ENCODE measurements at regions of chr7 and their contacts with region 1.

Region 1: DNA sequence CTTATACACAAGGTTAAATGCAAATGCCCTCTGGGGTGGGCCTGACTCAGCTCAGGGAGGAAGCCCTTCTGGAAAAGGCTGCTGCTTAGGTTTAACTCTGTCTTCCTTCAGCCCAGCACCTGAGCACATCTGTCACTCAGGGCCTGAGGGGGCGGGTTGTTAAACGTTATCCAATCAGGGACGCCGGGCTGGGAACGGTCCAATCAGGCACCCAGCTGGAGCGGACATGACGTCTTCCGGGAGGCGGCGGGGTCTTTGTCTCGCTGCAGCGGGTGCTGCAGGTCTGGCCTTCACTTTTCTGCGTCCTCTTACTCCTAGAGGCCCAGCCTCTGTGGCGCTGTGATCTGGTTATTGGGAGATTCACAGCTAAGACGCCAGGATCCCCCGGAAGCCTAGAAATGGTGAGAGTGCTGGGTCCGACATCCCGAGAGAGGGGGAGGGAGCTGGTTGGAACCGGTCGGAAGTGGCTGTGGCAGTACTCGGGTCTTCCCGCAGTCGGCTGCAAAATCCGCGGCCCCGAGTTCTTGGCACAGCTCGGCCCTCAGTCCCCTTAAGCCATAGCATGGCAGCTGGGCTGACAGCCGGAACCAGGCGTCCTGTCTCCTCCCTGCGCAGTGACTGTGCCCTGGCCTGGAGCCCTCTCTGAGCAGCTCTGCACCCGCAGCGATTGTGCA is at the start of gene ZNF138:
- DNase-seq: peak; percentile 97
- H3K4me3 ChIP-seq: peak within 1 kb of the TSS; percentile 64 to 74
- H3K27ac ChIP-seq: peak within 1 kb of the TSS; percentile 80 to 83
- H3K4me1 ChIP-seq: no peaks in the 10 kb centered on the region
- H3K27me3 ChIP-seq: no peaks in the 10 kb centered on the region
- CTCF ChIP-seq: peak in 1 of 4 experiments; percentile 24
- POLR2A ChIP-seq: peak; percentile 51
- total RNA-seq, gene ZNF138: 10.1 to 13.5 TPM

Region 2: GRCh38 chr7:64706625-64707292 is 87.5 kb before region 1 on chr7:
- intact Hi-C with region 1: no loop called
- DNase-seq: no peak
- H3K4me3 ChIP-seq: no peak overlapping the region
- H3K27ac ChIP-seq: no peak overlapping the region
- H3K4me1 ChIP-seq: no peaks in the 10 kb centered on the region
- H3K27me3 ChIP-seq: no peaks in the 10 kb centered on the region
- CTCF ChIP-seq: no peak
- POLR2A ChIP-seq: no peak

Region 3: DNA sequence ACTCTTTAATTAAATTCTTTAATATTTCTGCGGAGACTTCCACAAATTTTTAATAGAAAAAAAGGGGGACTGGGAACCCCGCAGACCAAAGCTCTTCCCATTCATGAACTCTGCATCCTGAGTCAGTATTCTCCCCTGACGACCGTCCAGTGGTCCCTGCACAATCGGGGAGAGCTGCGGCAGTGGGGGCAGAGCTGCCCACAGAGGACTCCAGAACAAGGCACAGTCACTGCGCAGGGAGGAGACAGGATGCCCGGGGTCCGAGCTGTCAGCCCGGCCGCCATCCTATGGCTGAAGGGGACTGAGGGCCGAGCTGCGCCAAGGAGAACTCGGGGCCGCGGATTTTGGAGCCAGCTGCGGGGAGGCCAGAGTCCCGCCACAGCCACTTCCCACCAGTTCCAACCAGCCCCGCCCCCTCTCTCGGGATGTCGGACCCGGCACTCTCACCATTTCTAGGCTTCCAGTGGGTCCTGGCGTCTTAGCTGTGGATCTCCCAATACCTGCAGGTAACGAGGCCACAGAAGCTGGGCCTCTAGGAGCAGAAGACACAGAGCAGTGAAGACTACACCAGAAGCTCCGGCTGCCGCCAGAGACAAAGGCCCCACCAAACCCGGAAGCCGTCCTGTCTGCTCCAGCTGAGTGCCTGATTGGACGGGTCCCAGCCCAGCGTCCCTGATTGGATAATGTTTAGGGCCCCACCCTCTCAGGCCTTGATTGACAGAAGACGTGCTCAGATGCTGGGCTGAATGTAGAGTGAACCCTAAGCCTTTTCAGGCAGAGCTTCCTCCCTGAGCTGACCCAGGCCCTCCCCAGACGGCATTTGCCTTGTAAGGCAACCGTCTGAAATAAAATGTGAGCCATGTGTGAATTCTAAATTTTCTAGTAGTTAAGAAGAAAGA is 212.0 kb after region 1 on chr7 and contains the start of gene ERV3-1:
- intact Hi-C with region 1: loop called (anchors 2 kb)
- DNase-seq: peak; percentile 97
- H3K4me3 ChIP-seq: peak within 1 kb of the TSS; percentile 66 to 75
- H3K27ac ChIP-seq: peak within 1 kb of the TSS; percentile 73 to 87
- H3K4me1 ChIP-seq: no peaks in the 10 kb centered on the region
- H3K27me3 ChIP-seq: no peaks in the 10 kb centered on the region
- CTCF ChIP-seq: peak in 1 of 4 experiments; percentile 9
- POLR2A ChIP-seq: peak; percentile 95
- total RNA-seq, gene ERV3-1: 11.3 to 67.7 TPM

Measured in prostate gland (tissue), 2 donors.